Activated CD4-positive, alpha-beta T cell treated with anti-CD3 and anti-CD28 coated beads for 36 hours (primary cell): ENCODE measurements at regions of chr1 and their contacts with region 1.

Region 1: GRCh38 chr1:53837924-53838652 is at the start of gene NDC1:
- DNase-seq: peak; percentile 92
- ATAC-seq: peak; percentile 93
- H3K4me3 Mint-ChIP-seq: peak within 1 kb of the TSS; percentile 100
- H3K27ac Mint-ChIP-seq: peak within 1 kb of the TSS; percentile 96
- H3K4me1 Mint-ChIP-seq: peaks cover 25% of the 10 kb centered on the region
- H3K27me3 Mint-ChIP-seq: peaks cover 2% of the 10 kb centered on the region
- total RNA-seq, gene NDC1: 31.2 to 38.5 TPM

Region 2: DNA sequence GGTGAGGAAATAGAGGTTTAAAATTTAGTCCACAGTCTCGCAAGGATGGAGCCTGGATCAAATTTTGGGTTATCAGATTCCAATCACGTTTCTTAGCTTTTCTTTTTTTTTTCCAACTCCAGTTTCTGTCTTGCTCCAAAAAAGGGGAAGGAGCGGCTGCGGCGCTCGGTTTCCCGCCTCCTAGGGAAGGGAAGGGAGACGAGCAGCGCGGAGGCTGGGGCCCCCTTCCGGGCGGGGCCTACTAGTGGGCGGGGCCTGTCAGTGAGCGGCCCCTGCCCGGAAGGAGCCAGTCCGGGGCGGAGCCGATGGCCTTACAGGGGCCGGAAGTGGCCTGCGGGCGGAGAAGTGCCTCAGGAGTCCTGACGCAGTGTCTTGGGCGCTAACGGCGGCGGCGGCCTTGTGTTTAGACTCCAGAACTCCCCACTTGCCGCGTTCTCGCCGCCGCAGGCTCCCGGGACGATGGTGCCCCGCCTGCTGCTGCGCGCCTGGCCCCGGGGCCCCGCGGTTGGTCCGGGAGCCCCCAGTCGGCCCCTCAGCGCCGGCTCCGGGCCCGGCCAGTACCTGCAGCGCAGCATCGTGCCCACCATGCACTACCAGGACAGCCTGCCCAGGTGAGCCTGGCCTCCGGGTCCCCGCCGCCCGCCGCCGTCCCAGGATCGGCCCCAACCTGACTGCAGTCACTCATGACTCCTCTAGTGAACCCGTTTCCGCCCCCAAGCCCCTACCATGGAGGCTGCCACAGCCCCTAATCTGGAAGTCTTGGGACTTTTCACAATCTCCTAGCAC is 641.4 kb before region 1 on chr1 and contains the start of gene CPT2:
- CTCF ChIA-PET with region 1: no interaction called
- POLR2A ChIA-PET with region 1: no interaction called
- intact Hi-C with region 1: loop called in 1 of 2 experiments (anchors 1 kb)
- DNase-seq: peak; percentile 96
- ATAC-seq: peak; percentile 98
- H3K4me3 Mint-ChIP-seq: peak within 1 kb of the TSS; percentile 98
- H3K27ac Mint-ChIP-seq: peak within 1 kb of the TSS; percentile 99
- H3K4me1 Mint-ChIP-seq: peaks cover 25% of the 10 kb centered on the region
- H3K27me3 Mint-ChIP-seq: no peaks in the 10 kb centered on the region
- total RNA-seq, gene CPT2: 20.7 to 23.7 TPM

Region 3: GRCh38 chr1:53238197-53239155 is 599.6 kb before region 1 on chr1 and contains the start of gene MAGOH:
- CTCF ChIA-PET with region 1: no interaction called
- POLR2A ChIA-PET with region 1: no interaction called
- intact Hi-C with region 1: loop called in 1 of 2 experiments (anchors 2 kb)
- DNase-seq: peak; percentile 95
- ATAC-seq: peak; percentile 98
- H3K4me3 Mint-ChIP-seq: peak within 1 kb of the TSS; percentile 96
- H3K27ac Mint-ChIP-seq: peak within 1 kb of the TSS; percentile 93
- H3K4me1 Mint-ChIP-seq: peaks cover 24% of the 10 kb centered on the region
- H3K27me3 Mint-ChIP-seq: no peaks in the 10 kb centered on the region
- total RNA-seq, gene MAGOH: 73.7 to 92.3 TPM

Region 4: GRCh38 chr1:53889304-53890298 is 51.5 kb after region 1 on chr1 and contains the start of gene YIPF1:
- CTCF ChIA-PET with region 1: no interaction called
- POLR2A ChIA-PET with region 1: interaction called, 5 read pairs
- intact Hi-C with region 1: loop called (anchors 1 kb)
- DNase-seq: peak; percentile 93
- ATAC-seq: peak; percentile 90
- H3K4me3 Mint-ChIP-seq: peak within 1 kb of the TSS; percentile 96
- H3K27ac Mint-ChIP-seq: peak within 1 kb of the TSS; percentile 94
- H3K4me1 Mint-ChIP-seq: peaks cover 38% of the 10 kb centered on the region
- H3K27me3 Mint-ChIP-seq: no peaks in the 10 kb centered on the region
- total RNA-seq, gene YIPF1: 19.0 to 24.4 TPM

Region 5: GRCh38 chr1:54199765-54200518 is 361.9 kb after region 1 on chr1 and contains the starts of genes CYB5RL and MRPL37:
- CTCF ChIA-PET with region 1: no interaction called
- POLR2A ChIA-PET with region 1: no interaction called
- intact Hi-C with region 1: loop called in 1 of 2 experiments (anchors 1 kb)
- DNase-seq: peak; percentile 94
- ATAC-seq: peak; percentile 99
- H3K4me3 Mint-ChIP-seq: peak within 1 kb of the TSS; percentile 83
- H3K27ac Mint-ChIP-seq: peak within 1 kb of the TSS; percentile 84
- H3K4me1 Mint-ChIP-seq: peaks cover 30% of the 10 kb centered on the region
- H3K27me3 Mint-ChIP-seq: no peaks in the 10 kb centered on the region
- total RNA-seq, gene CYB5RL: 13.1 to 13.5 TPM
- total RNA-seq, gene MRPL37: 177 to 189 TPM

Region 6: DNA sequence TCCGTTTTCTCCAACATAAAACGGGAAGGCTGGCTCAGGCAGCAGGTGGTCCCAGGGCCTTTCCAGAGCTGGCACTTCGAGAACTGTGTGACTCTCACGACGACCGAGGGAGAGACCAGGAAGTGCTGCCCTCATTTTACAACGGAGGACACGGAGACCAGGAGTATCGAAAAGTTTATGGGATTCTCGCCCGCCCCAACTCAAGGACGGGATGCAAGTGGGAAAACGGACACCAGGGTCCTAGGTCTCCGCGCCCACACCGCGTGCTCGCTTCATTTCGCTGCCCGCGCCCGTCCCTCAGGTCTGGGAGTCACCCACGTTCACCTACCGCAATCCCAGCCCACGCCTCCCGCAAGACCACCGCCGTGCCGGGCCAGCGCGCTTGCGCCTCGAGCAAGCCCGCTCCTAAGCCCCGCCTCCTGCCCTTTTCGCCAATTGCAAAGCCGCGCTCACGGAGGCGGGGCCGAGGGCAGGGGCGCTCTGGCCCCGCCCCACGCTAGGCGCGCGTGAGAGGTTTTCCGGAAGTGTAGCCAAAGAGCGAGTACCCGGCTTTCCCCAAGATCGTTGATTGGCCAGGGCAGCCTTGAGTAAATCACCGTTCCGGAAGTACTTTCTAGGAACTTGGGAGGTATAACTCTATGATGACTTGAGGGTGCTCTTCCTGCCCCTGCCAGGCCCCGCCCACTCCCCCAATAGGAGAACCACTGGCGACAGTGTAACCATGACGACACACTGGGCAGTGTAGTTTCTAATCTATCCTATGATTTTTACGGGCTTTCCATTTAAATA is 926.2 kb after region 1 on chr1 and contains the start of gene PARS2:
- CTCF ChIA-PET with region 1: no interaction called
- POLR2A ChIA-PET with region 1: no interaction called
- intact Hi-C with region 1: loop called (anchors 1 kb)
- DNase-seq: peak; percentile 98
- ATAC-seq: peak; percentile 99
- H3K4me3 Mint-ChIP-seq: peak within 1 kb of the TSS; percentile 89
- H3K27ac Mint-ChIP-seq: peak within 1 kb of the TSS; percentile 91
- H3K4me1 Mint-ChIP-seq: peaks cover 13% of the 10 kb centered on the region
- H3K27me3 Mint-ChIP-seq: no peaks in the 10 kb centered on the region
- total RNA-seq, gene PARS2: 6.3 to 6.8 TPM